Ascending aorta (tissue), 2 donors: ENCODE measurements at regions of chr4 and their contacts with region 1.

Region 1: DNA sequence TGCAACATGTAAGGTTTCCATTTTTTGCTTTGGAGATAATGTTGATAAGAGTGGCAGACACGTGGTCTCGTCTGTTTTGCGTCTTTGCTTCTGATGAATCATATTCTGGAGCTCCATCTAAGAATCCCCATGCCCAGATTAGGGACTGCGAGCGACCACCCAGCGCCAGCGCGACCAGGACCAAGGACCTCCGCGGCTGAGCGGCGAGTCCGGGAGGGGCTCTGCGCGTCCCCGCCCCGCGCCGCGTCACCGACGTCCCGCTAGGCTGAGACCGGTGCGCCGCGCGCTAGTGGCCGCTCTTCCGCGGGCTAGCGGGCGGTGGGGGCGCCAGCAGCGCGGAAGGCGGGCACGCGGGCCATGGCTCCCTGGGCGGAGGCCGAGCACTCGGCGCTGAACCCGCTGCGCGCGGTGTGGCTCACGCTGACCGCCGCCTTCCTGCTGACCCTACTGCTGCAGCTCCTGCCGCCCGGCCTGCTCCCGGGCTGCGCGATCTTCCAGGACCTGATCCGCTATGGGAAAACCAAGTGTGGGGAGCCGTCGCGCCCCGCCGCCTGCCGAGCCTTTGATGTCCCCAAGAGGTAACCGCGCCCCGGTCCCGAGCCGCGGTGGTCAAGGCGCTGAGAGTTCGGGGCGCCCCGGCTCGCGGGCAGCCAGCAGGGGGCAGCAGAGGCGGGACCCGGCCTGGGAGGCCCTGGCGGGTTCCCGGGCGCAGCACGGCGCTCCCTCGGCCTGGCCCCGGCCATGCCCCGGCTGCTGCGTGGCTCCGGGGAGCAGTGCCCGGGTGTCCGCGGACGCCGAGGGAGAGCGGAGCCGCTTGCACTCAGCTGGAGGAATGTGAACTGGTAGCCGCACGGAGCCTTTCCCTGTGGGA is at the start of gene SRD5A3:
- DNase-seq: peak; percentile 48 to 91
- H3K4me3 ChIP-seq: peak within 1 kb of the TSS; percentile 73 to 90
- H3K27ac ChIP-seq: peak within 1 kb of the TSS; percentile 95 to 98
- H3K4me1 ChIP-seq: peaks cover 4 to 6% of the 10 kb centered on the region in 2 donors
- H3K27me3 ChIP-seq: no peaks in the 10 kb centered on the region
- CTCF ChIP-seq: peak; percentile 79 to 91 (median 88)
- total RNA-seq, gene SRD5A3: 6.8 TPM

Region 2: DNA sequence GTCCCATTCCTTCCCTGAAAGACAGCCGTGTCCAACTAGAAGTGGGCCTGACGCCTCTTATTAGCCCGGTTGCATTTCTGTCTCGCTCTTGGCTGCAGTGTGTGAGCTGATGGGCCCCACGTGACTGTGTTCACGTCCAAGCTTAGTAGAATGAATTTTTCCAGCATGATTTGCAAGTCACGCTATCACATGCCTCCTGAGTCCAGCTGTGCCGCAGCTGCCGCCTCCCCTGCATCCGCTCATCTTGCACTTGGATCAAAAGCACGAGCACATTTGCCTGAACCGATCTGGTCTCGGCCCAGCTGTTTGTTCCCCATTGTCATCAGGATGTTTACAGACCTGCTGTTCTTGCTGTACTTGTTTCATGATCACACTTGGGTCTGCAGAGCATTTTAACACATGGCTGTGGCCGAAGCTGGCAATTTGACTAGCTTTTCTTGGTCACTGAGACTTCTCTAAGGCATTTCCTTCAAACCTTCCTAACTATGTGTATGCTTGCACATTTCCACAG is 562.0 kb before region 1 on chr4:
- intact Hi-C with region 1: loop called (anchors 10 kb)
- DNase-seq: peak; percentile 76 to 95
- H3K4me3 ChIP-seq: peak overlapping the region in 1 of 2 donors; percentile 37
- H3K27ac ChIP-seq: peak overlapping the region; percentile 77 to 83
- H3K4me1 ChIP-seq: peaks cover 0 to 26% of the 10 kb centered on the region in 2 donors
- H3K27me3 ChIP-seq: no peaks in the 10 kb centered on the region
- CTCF ChIP-seq: no peak

Region 3: GRCh38 chr4:55358668-55359067 is 12.5 kb after region 1 on chr4:
- intact Hi-C with region 1: loop called (anchors 1 kb)
- DNase-seq: no peak
- H3K4me3 ChIP-seq: peak overlapping the region in 1 of 2 donors; percentile 41
- H3K27ac ChIP-seq: peak overlapping the region; percentile 80 to 86
- H3K4me1 ChIP-seq: peaks cover 0 to 22% of the 10 kb centered on the region in 2 donors
- H3K27me3 ChIP-seq: no peaks in the 10 kb centered on the region
- CTCF ChIP-seq: no peak

Region 4: DNA sequence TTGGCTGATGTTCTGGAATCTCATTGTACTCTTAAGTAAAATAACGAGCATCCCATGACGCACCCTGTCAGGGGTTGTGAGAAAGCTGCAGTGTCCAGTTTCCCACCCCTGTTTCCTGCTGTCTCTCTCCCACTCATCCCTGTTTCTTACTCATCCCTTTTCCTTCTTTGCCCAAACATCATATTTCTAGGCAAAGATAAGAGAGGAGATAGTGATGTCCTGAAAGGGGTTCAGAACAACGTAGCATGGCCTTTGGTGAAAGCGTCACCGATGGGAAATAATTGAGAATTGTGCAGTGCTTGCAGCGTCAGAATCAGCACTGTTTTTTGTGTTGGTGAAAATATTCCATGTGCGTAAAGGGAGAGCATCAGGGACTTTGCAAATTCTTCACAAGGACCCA is 26.0 kb after region 1 on chr4:
- intact Hi-C with region 1: no loop called
- DNase-seq: no peak
- H3K4me3 ChIP-seq: no peak overlapping the region
- H3K27ac ChIP-seq: no peak overlapping the region
- H3K4me1 ChIP-seq: no peaks in the 10 kb centered on the region
- H3K27me3 ChIP-seq: no peaks in the 10 kb centered on the region
- CTCF ChIP-seq: no peak

Region 5: GRCh38 chr4:55546756-55547465 is 200.7 kb after region 1 on chr4 and contains the start of gene CLOCK:
- intact Hi-C with region 1: loop called (anchors 2 kb)
- DNase-seq: peak; percentile 39 to 91
- H3K4me3 ChIP-seq: peak within 1 kb of the TSS; percentile 87 to 91
- H3K27ac ChIP-seq: peak within 1 kb of the TSS; percentile 96 to 97
- H3K4me1 ChIP-seq: peaks cover 0 to 18% of the 10 kb centered on the region in 2 donors
- H3K27me3 ChIP-seq: no peaks in the 10 kb centered on the region
- CTCF ChIP-seq: peak; percentile 39 to 58 (median 57)
- total RNA-seq, gene CLOCK: 17.6 TPM

Region 6: GRCh38 chr4:55736605-55737183 is 390.5 kb after region 1 on chr4:
- intact Hi-C with region 1: loop called (anchors 10 kb)
- DNase-seq: no peak
- H3K4me3 ChIP-seq: no peak overlapping the region
- H3K27ac ChIP-seq: no peak overlapping the region
- H3K4me1 ChIP-seq: no peaks in the 10 kb centered on the region
- H3K27me3 ChIP-seq: no peaks in the 10 kb centered on the region
- CTCF ChIP-seq: peak in 2 of 3 experiments; percentile 10 to 26

Region 7: DNA sequence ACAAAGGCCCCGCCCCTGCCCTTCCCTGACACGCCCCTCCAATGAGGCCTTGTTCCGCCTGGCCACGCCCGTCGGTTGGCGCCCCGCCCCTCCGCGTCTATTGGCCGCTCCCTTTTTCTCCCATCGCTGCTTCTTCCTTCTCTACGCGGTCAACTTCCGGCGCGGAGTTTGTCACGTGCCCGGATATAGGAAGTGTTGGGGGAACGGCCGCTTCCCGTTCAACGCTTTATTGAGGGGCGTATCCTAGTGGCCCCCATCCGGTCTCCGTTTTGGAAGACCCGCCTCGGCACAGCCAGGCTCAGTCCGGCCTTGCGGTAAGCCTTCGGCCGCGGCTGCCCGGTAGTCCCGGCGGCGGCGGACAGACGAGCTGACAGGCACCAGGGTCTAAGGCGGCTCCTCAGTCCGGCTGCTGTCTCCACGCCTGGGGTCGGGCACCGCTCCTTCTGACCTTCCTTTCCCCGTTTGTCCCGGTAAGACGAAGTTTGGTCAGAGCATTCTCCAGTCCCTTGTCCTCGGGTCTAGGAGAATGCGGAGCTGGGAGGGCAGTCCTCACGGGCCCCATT is 507.4 kb after region 1 on chr4 and contains the start of gene EXOC1:
- intact Hi-C with region 1: loop called (anchors 5 kb)
- DNase-seq: peak; percentile 95 to 99
- H3K4me3 ChIP-seq: peak within 1 kb of the TSS; percentile 90 to 93
- H3K27ac ChIP-seq: peak within 1 kb of the TSS; percentile 87 to 96
- H3K4me1 ChIP-seq: peaks cover 0 to 7% of the 10 kb centered on the region in 2 donors
- H3K27me3 ChIP-seq: no peaks in the 10 kb centered on the region
- CTCF ChIP-seq: no peak
- total RNA-seq, gene EXOC1: 13.6 TPM

Region 8: DNA sequence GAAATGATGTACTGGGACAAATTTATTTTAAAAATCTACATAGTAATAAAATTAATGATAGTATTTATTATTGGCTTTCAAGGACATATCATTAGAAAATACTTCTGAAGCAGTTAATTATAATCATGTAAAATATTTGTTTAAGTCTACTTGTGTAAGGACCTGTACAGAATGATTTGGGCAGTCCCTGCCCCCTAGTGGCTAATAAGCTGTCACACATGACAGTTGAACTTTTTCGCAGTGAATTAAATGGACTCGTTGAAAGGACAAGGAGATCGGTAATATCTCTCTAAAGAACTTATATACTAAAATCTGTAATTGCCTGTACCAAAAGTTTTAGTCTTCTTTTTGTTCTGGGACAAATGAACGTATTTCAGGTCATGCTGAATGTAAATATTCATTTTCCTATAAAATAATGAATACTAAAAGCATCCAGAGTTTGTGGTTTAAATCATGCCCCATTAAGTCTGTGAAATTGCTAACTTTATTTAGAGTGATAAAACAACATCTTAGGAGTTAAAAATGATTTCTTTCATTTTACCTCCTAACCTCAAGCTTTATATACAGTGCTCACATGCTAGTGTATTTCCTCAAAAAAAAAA is 520.9 kb after region 1 on chr4:
- intact Hi-C with region 1: loop called (anchors 5 kb)
- DNase-seq: no peak
- H3K4me3 ChIP-seq: peak overlapping the region in 1 of 2 donors; percentile 14
- H3K27ac ChIP-seq: peak overlapping the region; percentile 77
- H3K4me1 ChIP-seq: peaks cover 2 to 11% of the 10 kb centered on the region in 2 donors
- H3K27me3 ChIP-seq: no peaks in the 10 kb centered on the region
- CTCF ChIP-seq: peak; percentile 29 to 70 (median 59)